ENCODE measurements at regions of chr6 and their contacts with region 1.

Region 1: GRCh38 chr6:163446549-163446948 is 32.0 kb downstream of the QKI start:
- DNase-seq: no peak
- H3K4me3 ChIP-seq: no peak overlapping the region
- H3K4me3 Mint-ChIP-seq: no peak overlapping the region
- H3K27ac ChIP-seq: no peak overlapping the region
- H3K27ac Mint-ChIP-seq: no peak overlapping the region
- H3K4me1 ChIP-seq: peaks cover 4% of the 10 kb centered on the region
- H3K4me1 Mint-ChIP-seq: peaks cover 26 to 39% (median 32%) of the 10 kb centered on the region in 4 donors
- H3K27me3 ChIP-seq: no peaks in the 10 kb centered on the region
- H3K27me3 Mint-ChIP-seq: no peaks in the 10 kb centered on the region

Region 2: DNA sequence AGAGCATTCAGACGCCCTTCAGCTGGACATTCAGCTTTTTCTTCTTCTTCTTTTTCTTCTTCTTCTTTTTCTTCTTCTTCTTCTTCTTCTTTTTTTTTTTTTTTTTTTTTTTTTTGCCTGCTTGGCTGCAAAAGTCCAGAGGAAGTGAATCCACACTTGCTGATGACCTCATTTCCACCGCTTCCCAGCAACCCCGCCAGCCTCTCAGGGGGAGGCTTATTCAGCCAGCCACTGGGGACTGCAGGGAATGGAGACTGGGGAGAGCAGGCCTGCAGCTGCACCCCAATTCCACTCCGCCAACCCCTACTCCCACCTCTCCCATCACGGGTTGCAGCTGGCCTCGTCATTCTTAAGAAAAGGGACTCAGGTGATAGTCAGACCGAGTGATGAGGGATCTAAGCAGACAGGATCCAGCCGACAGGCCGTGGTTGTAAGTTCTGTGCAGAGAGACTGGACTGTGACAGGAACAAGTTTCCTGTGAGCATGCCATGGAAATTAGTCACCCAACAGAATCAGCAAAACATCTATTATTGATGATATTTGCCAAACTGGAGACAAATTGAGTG is 91.0 kb before region 1 on chr6:
- CTCF ChIA-PET with region 1: no interaction called
- POLR2A ChIA-PET with region 1: no interaction called
- intact Hi-C with region 1: no loop called
- DNase-seq: no peak
- H3K4me3 ChIP-seq: no peak overlapping the region
- H3K4me3 Mint-ChIP-seq: no peak overlapping the region
- H3K27ac ChIP-seq: no peak overlapping the region
- H3K27ac Mint-ChIP-seq: no peak overlapping the region
- H3K4me1 ChIP-seq: no peaks in the 10 kb centered on the region
- H3K4me1 Mint-ChIP-seq: peaks cover 0 to 2% (median 0%) of the 10 kb centered on the region in 4 donors
- H3K27me3 ChIP-seq: no peaks in the 10 kb centered on the region
- H3K27me3 Mint-ChIP-seq: peaks cover under 1 to 14% of the 10 kb centered on the region in 2 donors

Region 3: GRCh38 chr6:163460307-163460782 is 13.8 kb after region 1 on chr6:
- CTCF ChIA-PET with region 1: interaction called, 3 read pairs
- POLR2A ChIA-PET with region 1: interaction called, 4 read pairs
- intact Hi-C with region 1: loop called (anchors 2 kb)
- DNase-seq: peak; percentile 54 to 72 (median 63)
- H3K4me3 ChIP-seq: peak overlapping the region; percentile 48 to 66
- H3K4me3 Mint-ChIP-seq: peak overlapping the region; percentile 87 to 99 (median 94)
- H3K27ac ChIP-seq: peak overlapping the region; percentile 79
- H3K27ac Mint-ChIP-seq: peak overlapping the region; percentile 85 to 100 (median 99)
- H3K4me1 ChIP-seq: peaks cover 60% of the 10 kb centered on the region
- H3K4me1 Mint-ChIP-seq: peaks cover 50 to 74% (median 63%) of the 10 kb centered on the region in 4 donors
- H3K27me3 ChIP-seq: no peaks in the 10 kb centered on the region
- H3K27me3 Mint-ChIP-seq: no peaks in the 10 kb centered on the region

Measured in CD4-positive, alpha-beta memory T cell (primary cell).